Common myeloid progenitor, CD34-positive (primary cell): ENCODE measurements at regions of chrX and their contacts with region 1.

Region 1: DNA sequence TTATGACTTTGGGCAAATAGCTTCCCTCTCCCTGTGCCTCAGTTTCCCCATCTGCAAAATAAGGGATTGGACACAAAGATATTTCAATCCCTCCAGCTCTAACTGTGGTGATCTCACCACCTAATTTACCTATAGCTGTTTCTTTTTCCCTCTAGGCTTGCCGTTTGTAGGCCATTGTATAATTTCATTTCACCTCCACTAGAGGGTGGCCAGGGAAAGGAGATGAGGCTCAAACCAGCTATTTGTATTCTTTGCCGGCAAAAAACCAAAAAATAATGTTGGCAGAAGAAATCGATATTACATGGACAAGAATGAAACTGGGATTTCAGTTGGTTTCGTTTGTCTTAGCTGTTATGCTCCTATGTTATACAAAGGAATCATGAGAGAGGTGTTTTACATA is 36.1 kb upstream of the DOCK11 start:
- DNase-seq: peak; percentile 46 to 65 (median 61)
- H3K4me3 ChIP-seq: no peak overlapping the region
- H3K27ac ChIP-seq: no peak overlapping the region
- H3K4me1 ChIP-seq: peaks cover 0 to 4% (median 0%) of the 10 kb centered on the region in 4 experiments
- H3K27me3 ChIP-seq: no peaks in the 10 kb centered on the region

Region 2: DNA sequence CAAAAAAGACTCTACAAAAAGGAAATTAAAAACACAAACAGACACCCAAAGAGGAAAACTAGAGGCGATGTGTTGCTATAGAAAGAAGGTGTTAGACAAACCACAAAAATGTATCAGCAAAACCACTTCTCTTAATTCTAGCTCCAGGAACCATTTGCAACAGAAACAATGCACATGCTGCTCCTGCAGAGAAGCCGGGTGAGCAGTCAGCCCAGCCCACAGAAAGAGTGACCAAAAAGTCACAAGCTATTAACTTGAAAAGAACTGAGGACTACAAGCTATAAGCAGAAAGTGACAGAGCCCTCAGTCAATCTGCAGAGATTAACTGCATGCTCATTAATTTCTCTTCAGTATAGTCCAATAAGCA is 246.7 kb before region 1 on chrX:
- CTCF ChIA-PET with region 1: no interaction called
- POLR2A ChIA-PET with region 1: no interaction called
- DNase-seq: peak; percentile 22 to 82 (median 76)
- H3K4me3 ChIP-seq: peak overlapping the region in 1 of 7 experiments; percentile 28
- H3K27ac ChIP-seq: no peak overlapping the region
- H3K4me1 ChIP-seq: peaks cover 0 to 37% (median 28%) of the 10 kb centered on the region in 4 experiments
- H3K27me3 ChIP-seq: no peaks in the 10 kb centered on the region

Region 3: DNA sequence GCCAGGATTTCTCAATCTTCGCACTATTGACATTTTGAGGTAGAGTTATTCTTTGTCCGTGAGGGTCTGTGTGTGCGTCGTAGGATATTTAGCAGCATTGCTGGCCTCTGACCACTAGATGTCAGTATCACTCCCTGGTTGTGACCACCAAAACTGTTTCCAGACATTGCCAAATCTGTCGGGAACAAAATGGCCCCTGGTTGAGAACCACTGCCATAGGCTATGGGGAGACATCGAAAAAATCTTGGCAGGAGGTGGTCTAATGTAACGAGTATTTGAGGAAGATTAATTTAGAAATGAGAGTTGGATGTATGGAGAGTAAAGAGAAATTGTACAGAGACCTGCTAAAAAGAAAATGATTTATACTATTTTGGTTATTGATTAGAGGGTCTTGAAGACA is 144.5 kb after region 1 on chrX:
- CTCF ChIA-PET with region 1: interaction called, 45 read pairs
- POLR2A ChIA-PET with region 1: no interaction called
- DNase-seq: peak; percentile 56 to 79 (median 75)
- H3K4me3 ChIP-seq: no peak overlapping the region
- H3K27ac ChIP-seq: no peak overlapping the region
- H3K4me1 ChIP-seq: no peaks in the 10 kb centered on the region
- H3K27me3 ChIP-seq: no peaks in the 10 kb centered on the region